WTC11 (cell line): ENCODE measurements at regions of chr12 and their contacts with region 1.

Region 1: GRCh38 chr12:124568431-124569374 is 1.3 kb upstream of the NCOR2 start:
- DNase-seq: peak; percentile 44
- ATAC-seq: peak; percentile 8
- H3K4me3 Mint-ChIP-seq: peak overlapping the region; percentile 79
- H3K27ac Mint-ChIP-seq: no peak overlapping the region
- H3K4me1 Mint-ChIP-seq: peaks cover 54% of the 10 kb centered on the region
- H3K27me3 Mint-ChIP-seq: no peaks in the 10 kb centered on the region
- CTCF ChIP-seq: no peak

Region 2: DNA sequence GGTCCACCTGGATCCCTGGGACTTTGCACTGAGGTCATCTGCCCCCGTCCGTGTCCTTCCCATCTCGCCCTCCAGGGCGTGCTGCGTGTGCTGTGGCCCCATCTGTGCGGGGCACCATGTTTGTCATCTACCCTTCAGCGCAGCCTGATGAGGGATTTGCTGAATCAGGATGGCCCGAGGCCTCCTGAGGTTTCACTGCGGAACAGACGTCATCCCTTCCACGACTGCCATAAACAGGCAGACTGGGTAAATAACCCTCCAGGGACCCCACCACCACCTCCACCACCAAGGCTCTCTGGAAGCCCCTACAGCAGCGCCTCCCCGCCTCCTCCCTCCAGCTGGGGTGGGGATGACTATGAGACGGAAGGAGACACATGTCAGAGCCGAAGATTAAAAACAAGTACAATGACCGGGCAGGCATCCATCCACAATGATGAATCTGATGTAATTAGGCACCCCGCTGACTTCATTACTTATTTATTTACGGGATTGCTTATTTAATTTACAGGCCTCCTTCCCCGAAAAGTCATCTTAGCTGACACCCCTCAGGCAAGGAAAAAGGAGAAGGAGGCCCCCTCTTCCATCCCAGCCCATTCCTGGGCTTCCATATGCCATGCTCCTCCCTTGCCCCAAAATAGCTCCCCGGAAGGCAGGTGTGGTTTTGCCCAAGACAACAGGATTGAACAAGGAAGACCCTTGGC is 40.7 kb before region 1 on chr12:
- CTCF ChIA-PET with region 1: no interaction called
- POLR2A ChIA-PET with region 1: interaction called, 13 read pairs
- DNase-seq: no peak
- ATAC-seq: peak; percentile 49
- H3K4me3 Mint-ChIP-seq: no peak overlapping the region
- H3K27ac Mint-ChIP-seq: peak overlapping the region; percentile 63
- H3K4me1 Mint-ChIP-seq: peaks cover 31% of the 10 kb centered on the region
- H3K27me3 Mint-ChIP-seq: no peaks in the 10 kb centered on the region
- CTCF ChIP-seq: no peak

Region 3: DNA sequence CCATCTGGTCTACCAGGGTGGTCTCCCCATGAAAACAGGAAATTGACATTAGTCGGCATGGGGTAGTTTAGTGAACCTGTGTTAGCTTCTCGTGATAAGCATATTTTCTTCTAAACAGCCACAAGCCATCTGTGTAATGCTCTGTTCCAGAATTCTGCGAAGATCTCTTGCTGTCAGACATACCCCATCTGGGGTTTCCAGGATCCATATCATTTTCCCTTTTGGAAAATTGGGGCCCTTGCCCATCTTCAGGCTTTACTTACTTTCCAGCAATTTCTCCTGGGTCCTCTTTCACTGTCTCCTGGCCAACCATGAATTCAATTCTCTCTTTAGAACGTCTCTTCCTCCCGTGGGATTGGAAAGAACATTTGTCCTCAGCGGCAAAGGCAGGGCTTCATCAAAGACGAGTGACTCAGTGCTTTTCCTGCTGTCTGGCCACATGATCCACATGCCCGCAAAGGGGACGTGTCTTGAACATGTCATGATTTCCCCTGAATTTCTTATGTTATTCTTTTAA is 20.1 kb after region 1 on chr12:
- CTCF ChIA-PET with region 1: no interaction called
- POLR2A ChIA-PET with region 1: no interaction called
- DNase-seq: no peak
- ATAC-seq: no peak
- H3K4me3 Mint-ChIP-seq: no peak overlapping the region
- H3K27ac Mint-ChIP-seq: no peak overlapping the region
- H3K4me1 Mint-ChIP-seq: 0 out of 2 replicates have a peak, but pooled peaks cover 5% of the 10 kb centered on the region
- H3K27me3 Mint-ChIP-seq: no peaks in the 10 kb centered on the region; the same call in 1 of the 2 replicates
- CTCF ChIP-seq: no peak

Region 4: GRCh38 chr12:124655698-124656516 is 87.2 kb after region 1 on chr12:
- CTCF ChIA-PET with region 1: interaction called, 15 read pairs
- POLR2A ChIA-PET with region 1: interaction called, 7 read pairs
- DNase-seq: peak; percentile 77
- ATAC-seq: peak; percentile 85
- H3K4me3 Mint-ChIP-seq: peak overlapping the region; percentile 39
- H3K27ac Mint-ChIP-seq: peak overlapping the region; percentile 93
- H3K4me1 Mint-ChIP-seq: peaks cover 27% of the 10 kb centered on the region
- H3K27me3 Mint-ChIP-seq: no peaks in the 10 kb centered on the region
- CTCF ChIP-seq: no peak